ENCODE measurements at regions of chr1 and their contacts with region 1.

Region 1: DNA sequence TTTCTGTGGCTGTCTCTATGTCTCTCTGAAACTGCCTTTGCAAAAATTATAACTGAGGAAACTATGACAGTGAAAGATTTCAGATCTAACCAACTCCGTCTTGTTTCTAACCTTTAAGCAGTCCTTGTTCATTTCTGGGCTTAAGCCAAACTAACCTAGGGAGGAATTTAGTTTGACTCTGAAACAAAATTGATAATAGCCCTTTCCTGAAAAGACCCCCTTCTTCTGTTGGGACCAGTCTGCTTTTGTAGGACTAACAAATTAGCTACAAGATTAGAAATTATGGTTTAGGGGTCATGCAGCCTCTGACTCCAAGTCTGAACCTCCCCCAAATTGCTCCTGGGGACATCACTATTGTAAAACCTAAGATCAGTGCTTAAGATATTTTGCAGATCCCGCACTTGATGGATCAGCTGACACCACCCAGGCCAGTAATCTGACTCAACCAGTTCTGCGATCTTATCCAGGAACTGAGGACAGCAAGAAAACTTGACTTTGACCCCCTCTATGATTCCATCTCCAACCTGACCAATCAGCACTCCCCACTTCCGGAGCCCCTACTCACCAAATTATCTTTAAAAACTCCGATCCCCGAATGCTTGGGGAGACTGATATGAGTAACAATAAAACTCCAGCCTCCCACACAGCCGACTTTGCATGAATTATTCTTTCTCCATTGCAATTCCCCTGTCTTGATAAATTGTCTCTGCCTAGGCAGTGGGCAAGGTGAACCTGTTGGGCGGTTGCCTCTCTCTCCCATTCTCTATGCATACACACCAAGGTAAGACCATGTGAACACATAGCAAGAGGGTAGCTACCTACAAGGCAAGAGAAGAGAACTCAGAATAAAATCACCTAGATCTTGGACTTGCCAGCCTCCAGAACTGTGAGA is 11.1 kb upstream of the TRIM63 start:
- DNase-seq: peak; percentile 66
- H3K4me3 ChIP-seq: no peak overlapping the region
- H3K4me3 Mint-ChIP-seq: peak overlapping the region; percentile 54
- H3K27ac Mint-ChIP-seq: peak overlapping the region; percentile 3
- H3K4me1 ChIP-seq: peaks cover 40% of the 10 kb centered on the region
- H3K4me1 Mint-ChIP-seq: peaks cover 12% of the 10 kb centered on the region
- H3K27me3 ChIP-seq: no peaks in the 10 kb centered on the region
- H3K27me3 Mint-ChIP-seq: no peaks in the 10 kb centered on the region
- CTCF ChIP-seq: no peak

Region 2: GRCh38 chr1:26045722-26046248 is 32.7 kb before region 1 on chr1 and contains the start of gene SLC30A2:
- CTCF ChIA-PET with region 1: no interaction called
- POLR2A ChIA-PET with region 1: no interaction called
- intact Hi-C with region 1: loop called (anchors 1 kb)
- DNase-seq: peak; percentile 41 to 44
- H3K4me3 ChIP-seq: peak within 1 kb of the TSS; percentile 41
- H3K4me3 Mint-ChIP-seq: peak within 1 kb of the TSS; percentile 71
- H3K27ac Mint-ChIP-seq: peak within 1 kb of the TSS; percentile 13
- H3K4me1 ChIP-seq: peaks cover 29% of the 10 kb centered on the region
- H3K4me1 Mint-ChIP-seq: peaks cover 10% of the 10 kb centered on the region
- H3K27me3 ChIP-seq: no peaks in the 10 kb centered on the region
- H3K27me3 Mint-ChIP-seq: no peaks in the 10 kb centered on the region
- CTCF ChIP-seq: no peak
- total RNA-seq, gene SLC30A2: 1.1 and 3.0 TPM in 2 replicates

Measured in Caco-2 (cell line).